K562 (cell line): ENCODE measurements at regions of chr9 and their contacts with region 1.

Region 1: DNA sequence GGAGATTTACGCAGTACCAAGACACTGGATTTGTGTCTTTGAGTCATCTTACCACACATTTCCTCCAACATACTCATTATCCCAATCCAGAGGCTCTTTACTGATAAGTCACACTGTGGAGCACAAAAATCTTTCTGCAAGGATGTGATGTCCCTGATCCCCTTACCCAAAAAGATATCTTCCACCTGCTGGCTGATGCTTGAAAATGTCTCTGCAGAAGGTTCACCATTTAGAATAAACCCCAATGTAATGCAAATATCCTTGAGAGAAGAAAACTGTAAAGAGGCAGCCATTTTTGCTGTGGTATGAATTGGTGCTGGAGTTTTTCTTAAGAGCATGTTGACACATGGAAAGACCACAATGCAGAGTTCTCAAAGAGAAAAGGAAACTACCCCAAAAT is 65.7 kb upstream of the RORB start:
- DNase-seq: no peak
- ATAC-seq: no peak
- H3K4me3 ChIP-seq: no peak overlapping the region
- H3K27ac ChIP-seq: no peak overlapping the region
- H3K4me1 ChIP-seq: no peaks in the 10 kb centered on the region
- H3K27me3 ChIP-seq: no peaks in the 10 kb centered on the region
- CTCF ChIP-seq: no peak
- EP300 ChIP-seq: no peak
- POLR2A ChIP-seq: no peak
- RAD21 ChIP-seq: no peak

Region 2: GRCh38 chr9:73845539-73845938 is 585.9 kb before region 1 on chr9:
- CTCF ChIA-PET with region 1: no interaction called
- POLR2A ChIA-PET with region 1: no interaction called
- in situ Hi-C with region 1: no loop called
- intact Hi-C with region 1: no loop called
- DNase-seq: no peak
- ATAC-seq: no peak
- H3K4me3 ChIP-seq: no peak overlapping the region
- H3K27ac ChIP-seq: no peak overlapping the region
- H3K4me1 ChIP-seq: no peaks in the 10 kb centered on the region
- H3K27me3 ChIP-seq: no peaks in the 10 kb centered on the region
- CTCF ChIP-seq: no peak
- EP300 ChIP-seq: no peak
- POLR2A ChIP-seq: no peak
- RAD21 ChIP-seq: no peak

Region 3: GRCh38 chr9:74399422-74399821 is 32.0 kb before region 1 on chr9:
- CTCF ChIA-PET with region 1: no interaction called
- POLR2A ChIA-PET with region 1: no interaction called
- in situ Hi-C with region 1: no loop called
- intact Hi-C with region 1: loop called (anchors 5 kb)
- DNase-seq: no peak
- ATAC-seq: no peak
- H3K4me3 ChIP-seq: no peak overlapping the region
- H3K27ac ChIP-seq: no peak overlapping the region
- H3K4me1 ChIP-seq: no peaks in the 10 kb centered on the region
- H3K27me3 ChIP-seq: no peaks in the 10 kb centered on the region
- CTCF ChIP-seq: no peak
- EP300 ChIP-seq: no peak
- POLR2A ChIP-seq: no peak
- RAD21 ChIP-seq: no peak